Spleen (tissue), 13 donors: ENCODE measurements at regions of chr10 and their contacts with region 1.

Region 1: GRCh38 chr10:122565728-122566206 is 5.2 kb downstream of the DMBT1 start:
- DNase-seq: peak; percentile 81
- H3K4me3 ChIP-seq: no peak overlapping the region
- H3K27ac ChIP-seq: no peak overlapping the region
- H3K4me1 ChIP-seq: peaks cover 0 to 7% (median 0%) of the 10 kb centered on the region in 6 donors
- H3K27me3 ChIP-seq: peaks cover 0 to 65% (median 7%) of the 10 kb centered on the region in 7 donors
- CTCF ChIP-seq: peak; percentile 38 to 78 (median 70)
- POLR2A ChIP-seq: no peak

Region 2: DNA sequence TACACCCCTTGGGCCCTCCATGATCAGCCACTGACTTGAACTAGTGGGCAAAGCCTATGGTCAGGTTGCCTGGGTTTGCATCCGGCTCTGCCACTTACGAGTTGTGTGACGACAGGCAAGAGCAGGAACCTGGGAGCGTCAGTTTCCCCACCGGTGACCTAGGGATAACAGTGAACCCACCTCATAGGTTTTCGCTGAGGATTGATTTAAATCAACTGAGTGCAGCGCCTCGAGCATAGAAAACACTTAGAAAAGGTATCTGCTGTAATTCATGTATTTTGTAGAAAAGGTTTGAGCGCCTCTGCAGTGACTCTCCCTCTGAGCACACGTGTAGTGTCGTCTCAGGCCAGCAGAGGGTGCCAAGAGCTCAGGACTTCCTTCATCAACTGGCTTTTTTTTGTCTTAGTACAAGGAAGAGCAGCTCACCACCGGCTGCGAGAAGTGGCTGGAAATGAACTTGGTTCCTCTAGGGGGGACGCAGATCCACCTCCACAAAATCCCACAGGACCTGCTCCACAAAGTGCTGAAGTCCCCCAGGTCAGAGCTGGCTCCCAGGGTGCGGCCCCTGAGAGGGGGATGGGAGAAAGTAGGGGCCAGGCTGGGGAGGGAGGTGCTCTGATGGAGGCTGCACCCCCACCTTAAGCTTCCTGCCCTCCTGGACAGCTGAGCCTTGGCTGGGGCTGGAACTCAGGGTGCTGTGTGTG is 267.0 kb before region 1 on chr10:
- intact Hi-C with region 1: loop called (anchors 5 kb)
- DNase-seq: peak; percentile 83
- H3K4me3 ChIP-seq: peak overlapping the region in 1 of 8 donors; percentile 35
- H3K27ac ChIP-seq: no peak overlapping the region
- H3K4me1 ChIP-seq: peaks cover 0 to 7% (median 4%) of the 10 kb centered on the region in 6 donors
- H3K27me3 ChIP-seq: peaks cover 0 to 29% (median 0%) of the 10 kb centered on the region in 7 donors
- CTCF ChIP-seq: peak; percentile 74 to 93 (median 87)
- POLR2A ChIP-seq: no peak

Region 3: GRCh38 chr10:122342293-122343134 is 223.3 kb before region 1 on chr10:
- intact Hi-C with region 1: loop called (anchors 5 kb)
- DNase-seq: no peak
- H3K4me3 ChIP-seq: no peak overlapping the region
- H3K27ac ChIP-seq: no peak overlapping the region
- H3K4me1 ChIP-seq: peaks cover 0 to 9% (median 0%) of the 10 kb centered on the region in 6 donors
- H3K27me3 ChIP-seq: no peaks in the 10 kb centered on the region
- CTCF ChIP-seq: peak; percentile 49 to 83 (median 75)
- POLR2A ChIP-seq: no peak

Region 4: GRCh38 chr10:122446668-122447423 is 118.9 kb before region 1 on chr10:
- intact Hi-C with region 1: loop called (anchors 10 kb)
- DNase-seq: no peak
- H3K4me3 ChIP-seq: no peak overlapping the region
- H3K27ac ChIP-seq: no peak overlapping the region
- H3K4me1 ChIP-seq: peaks cover 0 to 8% (median 3%) of the 10 kb centered on the region in 6 donors
- H3K27me3 ChIP-seq: peaks cover 0 to 36% (median 3%) of the 10 kb centered on the region in 7 donors
- CTCF ChIP-seq: no peak
- POLR2A ChIP-seq: no peak